ENCODE measurements at regions of chr1 and their contacts with region 1.

Region 1: GRCh38 chr1:9196129-9197040 is 38.2 kb upstream of the H6PD start:
- DNase-seq: peak; percentile 90
- H3K4me3 Mint-ChIP-seq: no peak overlapping the region
- H3K27ac Mint-ChIP-seq: no peak overlapping the region
- H3K4me1 Mint-ChIP-seq: peaks cover 20% of the 10 kb centered on the region
- H3K27me3 Mint-ChIP-seq: peaks cover 60% of the 10 kb centered on the region

Region 2: GRCh38 chr1:8976896-8977450 is 219.4 kb before region 1 on chr1:
- intact Hi-C with region 1: no loop called
- DNase-seq: no peak
- H3K4me3 Mint-ChIP-seq: no peak overlapping the region
- H3K27ac Mint-ChIP-seq: no peak overlapping the region
- H3K4me1 Mint-ChIP-seq: peaks cover 15% of the 10 kb centered on the region
- H3K27me3 Mint-ChIP-seq: no peaks in the 10 kb centered on the region

Region 3: DNA sequence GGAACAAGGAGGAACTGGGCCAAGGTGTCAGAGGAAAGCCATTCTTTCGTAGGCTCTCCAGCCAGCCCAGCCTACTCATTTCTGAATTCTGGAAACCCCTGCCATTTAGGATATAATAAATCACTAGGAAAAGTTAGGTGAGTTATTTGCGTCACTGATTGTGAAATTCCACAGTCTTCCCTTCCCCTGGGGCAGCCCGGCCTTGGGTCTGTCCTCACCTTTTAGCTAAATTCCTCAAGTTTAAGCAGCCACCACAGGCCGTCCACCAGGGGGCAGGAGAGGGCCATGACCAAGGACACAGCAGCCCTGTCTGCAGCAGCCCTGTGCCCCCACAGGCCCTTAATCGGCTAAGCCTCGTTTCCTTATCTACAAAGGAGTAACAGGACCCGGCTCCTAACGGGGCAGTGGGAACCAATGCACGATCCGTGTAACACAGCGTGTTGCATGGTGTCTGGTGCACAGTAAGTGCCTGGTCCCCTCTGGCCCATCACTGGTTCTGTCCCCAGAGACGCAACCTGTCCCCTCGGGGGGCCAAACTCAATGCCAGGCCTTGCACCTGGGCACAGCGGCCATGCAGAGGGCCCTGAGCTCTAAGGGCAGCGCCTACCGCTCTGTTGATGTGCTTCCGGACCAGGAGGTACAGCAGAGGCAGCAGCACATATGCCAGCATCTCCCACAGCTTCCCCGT is 85.6 kb before region 1 on chr1:
- intact Hi-C with region 1: loop called (anchors 1 kb)
- DNase-seq: peak; percentile 95
- H3K4me3 Mint-ChIP-seq: no peak overlapping the region
- H3K27ac Mint-ChIP-seq: no peak overlapping the region
- H3K4me1 Mint-ChIP-seq: peaks cover 18% of the 10 kb centered on the region
- H3K27me3 Mint-ChIP-seq: no peaks in the 10 kb centered on the region

Region 4: GRCh38 chr1:9145021-9145668 is 51.2 kb before region 1 on chr1:
- intact Hi-C with region 1: loop called (anchors 1 kb)
- DNase-seq: no peak
- H3K4me3 Mint-ChIP-seq: no peak overlapping the region
- H3K27ac Mint-ChIP-seq: no peak overlapping the region
- H3K4me1 Mint-ChIP-seq: no peaks in the 10 kb centered on the region
- H3K27me3 Mint-ChIP-seq: peaks cover 1% of the 10 kb centered on the region

Region 5: GRCh38 chr1:9181176-9181906 is 15.0 kb before region 1 on chr1:
- intact Hi-C with region 1: loop called (anchors 2 kb)
- DNase-seq: peak; percentile 94
- H3K4me3 Mint-ChIP-seq: peak overlapping the region; percentile 88
- H3K27ac Mint-ChIP-seq: peak overlapping the region; percentile 85
- H3K4me1 Mint-ChIP-seq: peaks cover 20% of the 10 kb centered on the region
- H3K27me3 Mint-ChIP-seq: peaks cover 13% of the 10 kb centered on the region

Region 6: GRCh38 chr1:9234223-9235095 is 38.1 kb after region 1 on chr1 and contains the start of gene H6PD:
- intact Hi-C with region 1: loop called (anchors 5 kb)
- DNase-seq: peak; percentile 96
- H3K4me3 Mint-ChIP-seq: peak within 1 kb of the TSS; percentile 90
- H3K27ac Mint-ChIP-seq: peak within 1 kb of the TSS; percentile 93
- H3K4me1 Mint-ChIP-seq: peaks cover 36% of the 10 kb centered on the region
- H3K27me3 Mint-ChIP-seq: no peaks in the 10 kb centered on the region
- total RNA-seq, gene H6PD: 17.4 and 17.7 TPM in 2 replicates

Measured in activated CD4-positive, alpha-beta T cell treated with anti-CD3 and anti-CD28 coated beads, Interleukin-2, amount 10 ng/mL, durations not matched to agents 24 days and 14 days (primary cell).